MCF 10A (cell line): ENCODE measurements at regions of chr11 and their contacts with region 1.

Region 1: DNA sequence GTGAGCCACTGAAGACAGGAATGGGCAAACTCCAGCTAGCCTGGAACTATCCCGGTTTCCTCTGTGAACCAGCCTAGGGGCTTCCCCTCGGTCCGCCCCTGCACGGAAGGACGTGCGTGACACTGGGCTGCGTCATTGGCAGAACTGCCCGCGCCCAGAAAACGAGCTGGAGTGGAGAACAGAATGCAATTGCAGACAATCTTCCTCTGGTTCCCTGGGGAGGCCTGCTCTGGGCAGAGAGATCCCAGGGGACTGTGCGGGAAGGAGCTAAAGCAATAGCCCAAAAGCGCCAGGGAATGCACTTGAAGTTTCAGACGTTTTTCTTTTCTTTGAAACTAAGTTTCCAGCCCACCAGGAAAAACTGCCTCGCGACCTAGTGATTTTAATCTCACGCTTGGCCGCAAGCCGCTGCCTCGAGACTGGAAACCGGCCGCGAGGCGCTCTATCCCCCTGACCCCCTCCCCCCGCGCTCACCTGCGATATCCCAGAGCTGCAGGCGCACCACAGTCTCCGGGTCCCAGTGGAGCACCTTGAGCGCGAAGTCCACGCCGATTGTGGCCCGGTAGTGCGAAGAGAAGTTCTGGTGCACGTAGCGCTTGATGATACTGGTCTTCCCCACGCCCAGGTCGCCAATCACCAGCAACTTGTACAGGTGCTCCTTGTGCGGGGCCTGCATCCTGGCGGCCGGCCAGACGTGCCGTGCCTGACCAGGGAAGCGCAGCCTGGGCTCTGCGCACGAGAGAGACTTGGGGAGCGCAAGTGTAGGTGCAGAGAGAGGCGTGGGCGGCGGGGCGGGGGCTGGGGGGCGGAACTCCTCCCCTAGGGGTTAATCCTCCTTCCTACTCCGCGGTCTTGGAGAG is at the start of gene RAB38:
- DNase-seq: peak; percentile 91
- H3K4me3 Mint-ChIP-seq: peak within 1 kb of the TSS; percentile 85
- H3K27ac Mint-ChIP-seq: peak within 1 kb of the TSS; percentile 91
- H3K4me1 Mint-ChIP-seq: peaks cover 40% of the 10 kb centered on the region
- H3K27me3 Mint-ChIP-seq: no peaks in the 10 kb centered on the region
- CTCF ChIP-seq: no peak
- total RNA-seq, gene RAB38: 77.7 and 80.9 TPM in 2 replicates

Region 2: GRCh38 chr11:87463486-87464102 is 711.3 kb before region 1 on chr11:
- CTCF ChIA-PET with region 1: interaction called, 5 read pairs
- POLR2A ChIA-PET with region 1: no interaction called
- intact Hi-C with region 1: loop called (anchors 10 kb)
- DNase-seq: peak; percentile 65
- H3K4me3 Mint-ChIP-seq: no peak overlapping the region
- H3K27ac Mint-ChIP-seq: no peak overlapping the region
- H3K4me1 Mint-ChIP-seq: no peaks in the 10 kb centered on the region
- H3K27me3 Mint-ChIP-seq: no peaks in the 10 kb centered on the region
- CTCF ChIP-seq: peak; percentile 61

Region 3: GRCh38 chr11:88103337-88104206 is 71.4 kb before region 1 on chr11:
- CTCF ChIA-PET with region 1: interaction called, 4 read pairs
- POLR2A ChIA-PET with region 1: interaction called, 4 read pairs
- intact Hi-C with region 1: loop called (anchors 2 kb)
- DNase-seq: peak; percentile 82
- H3K4me3 Mint-ChIP-seq: no peak overlapping the region
- H3K27ac Mint-ChIP-seq: no peak overlapping the region
- H3K4me1 Mint-ChIP-seq: peaks cover 23% of the 10 kb centered on the region
- H3K27me3 Mint-ChIP-seq: no peaks in the 10 kb centered on the region
- CTCF ChIP-seq: peak; percentile 51

Region 4: DNA sequence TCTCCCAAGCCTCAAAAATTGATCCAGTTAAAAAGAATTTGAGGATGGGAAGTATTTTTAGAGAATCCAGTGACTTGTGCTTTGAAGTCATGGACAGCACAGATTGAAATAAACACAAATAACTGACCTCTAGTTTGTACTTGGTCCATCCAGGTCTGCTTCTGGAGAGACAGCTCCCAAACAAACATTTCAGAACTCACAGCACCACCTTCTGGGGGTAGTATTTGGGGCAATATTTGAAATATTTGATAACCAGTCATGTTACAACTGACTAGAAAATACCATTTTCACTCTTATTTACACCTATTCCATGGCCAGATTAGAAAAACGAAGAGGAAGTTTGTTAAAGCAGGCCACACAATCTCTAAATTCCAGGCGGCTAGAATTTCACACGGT is 106.4 kb after region 1 on chr11:
- CTCF ChIA-PET with region 1: interaction called, 5 read pairs
- POLR2A ChIA-PET with region 1: interaction called, 6 read pairs
- intact Hi-C with region 1: loop called (anchors 5 kb)
- DNase-seq: peak; percentile 33
- H3K4me3 Mint-ChIP-seq: no peak overlapping the region
- H3K27ac Mint-ChIP-seq: no peak overlapping the region
- H3K4me1 Mint-ChIP-seq: peaks cover 7% of the 10 kb centered on the region
- H3K27me3 Mint-ChIP-seq: no peaks in the 10 kb centered on the region
- CTCF ChIP-seq: peak; percentile 28

Region 5: DNA sequence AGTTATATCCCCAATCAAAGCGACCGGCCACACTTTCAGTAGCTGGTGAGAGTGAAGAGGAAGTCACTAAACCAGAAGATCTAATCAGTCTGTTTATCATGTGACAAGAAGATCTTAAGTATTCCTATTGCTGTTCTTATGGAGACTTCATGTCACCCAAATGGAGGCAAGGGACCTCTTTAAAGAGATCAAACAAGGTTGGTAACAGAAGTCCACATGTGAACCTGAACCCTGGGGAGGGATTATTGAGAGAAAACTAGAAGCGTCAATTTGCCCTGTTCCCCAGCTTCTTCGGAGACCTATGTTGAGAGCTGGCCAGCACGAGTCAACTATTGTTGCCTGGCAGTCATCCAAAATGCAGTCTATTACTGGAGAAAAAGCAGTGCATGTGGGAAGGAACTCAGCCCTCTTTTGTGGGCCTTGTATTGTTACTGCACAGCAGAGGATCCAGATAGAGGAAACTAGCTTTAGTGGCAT is 239.5 kb after region 1 on chr11:
- CTCF ChIA-PET with region 1: no interaction called
- POLR2A ChIA-PET with region 1: interaction called, 17 read pairs
- intact Hi-C with region 1: loop called (anchors 10 kb)
- DNase-seq: peak; percentile 83
- H3K4me3 Mint-ChIP-seq: no peak overlapping the region
- H3K27ac Mint-ChIP-seq: peak overlapping the region; percentile 20
- H3K4me1 Mint-ChIP-seq: peaks cover 37% of the 10 kb centered on the region
- H3K27me3 Mint-ChIP-seq: no peaks in the 10 kb centered on the region
- CTCF ChIP-seq: no peak

Region 6: DNA sequence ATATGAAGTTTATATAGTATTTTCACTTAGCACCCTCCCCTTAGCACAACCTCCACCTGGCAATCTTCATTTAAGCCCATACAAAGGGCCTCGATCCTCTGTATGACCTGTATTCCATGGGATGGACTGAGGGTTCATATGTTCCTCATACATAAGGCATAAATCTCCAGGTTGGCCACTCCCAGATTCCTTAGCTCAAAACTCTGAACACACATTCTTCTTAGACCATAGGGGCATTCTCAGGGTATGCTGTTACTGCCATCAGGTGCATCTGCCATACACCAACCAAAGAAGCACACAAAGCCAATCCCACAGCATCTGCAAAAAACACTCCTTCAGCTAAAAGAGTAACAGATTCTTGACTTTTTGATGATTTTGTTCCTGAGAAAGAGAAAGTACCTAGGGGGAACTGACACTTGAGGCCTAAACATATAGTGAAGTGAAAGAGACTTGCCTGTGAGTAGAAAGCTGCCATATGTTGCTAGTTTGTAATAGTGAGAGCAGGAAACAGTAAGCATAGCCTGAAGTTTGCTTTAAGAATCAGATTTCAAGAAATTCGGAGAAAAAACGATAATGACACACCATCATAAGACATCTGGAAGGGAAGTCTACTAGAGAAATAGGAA is 260.4 kb after region 1 on chr11:
- CTCF ChIA-PET with region 1: no interaction called
- POLR2A ChIA-PET with region 1: no interaction called
- intact Hi-C with region 1: no loop called
- DNase-seq: no peak
- H3K4me3 Mint-ChIP-seq: no peak overlapping the region
- H3K27ac Mint-ChIP-seq: no peak overlapping the region
- H3K4me1 Mint-ChIP-seq: peaks cover 8% of the 10 kb centered on the region
- H3K27me3 Mint-ChIP-seq: no peaks in the 10 kb centered on the region
- CTCF ChIP-seq: no peak

Region 7: DNA sequence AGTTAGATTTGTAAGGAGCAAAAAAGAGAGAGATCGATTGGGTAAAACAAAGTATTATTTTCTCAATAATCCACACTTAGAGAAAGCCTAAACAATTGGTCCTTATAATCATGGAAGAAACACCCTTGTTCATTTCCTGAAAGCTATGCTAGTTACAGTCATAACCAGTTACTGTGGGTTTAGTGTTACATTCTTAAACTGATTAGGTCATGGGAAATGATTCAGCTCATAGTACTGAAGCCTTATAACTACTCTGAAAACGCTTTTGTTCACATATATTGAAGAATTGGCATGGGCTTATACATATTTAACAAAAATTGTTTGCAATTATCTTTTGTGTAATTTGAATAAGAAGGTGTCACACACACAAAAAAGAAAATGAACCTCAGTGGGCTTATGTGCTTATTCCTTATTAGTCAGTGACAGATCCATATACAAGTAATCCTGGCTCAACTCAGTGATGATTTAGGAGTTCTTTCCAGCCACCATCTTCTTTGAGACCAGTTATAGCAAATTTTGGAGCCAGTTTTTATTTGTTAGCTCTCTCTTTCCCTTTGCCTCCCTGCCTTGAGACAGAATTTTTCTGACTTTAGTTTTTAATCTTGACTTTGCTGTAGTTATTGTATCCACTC is 361.1 kb after region 1 on chr11:
- CTCF ChIA-PET with region 1: interaction called, 4 read pairs
- POLR2A ChIA-PET with region 1: interaction called, 12 read pairs
- intact Hi-C with region 1: loop called (anchors 5 kb)
- DNase-seq: peak; percentile 82
- H3K4me3 Mint-ChIP-seq: no peak overlapping the region
- H3K27ac Mint-ChIP-seq: peak overlapping the region; percentile 0
- H3K4me1 Mint-ChIP-seq: peaks cover 37% of the 10 kb centered on the region
- H3K27me3 Mint-ChIP-seq: no peaks in the 10 kb centered on the region
- CTCF ChIP-seq: no peak